A549 (cell line): ENCODE measurements at regions of chr19 and their contacts with region 1.

Region 1: GRCh38 chr19:34145741-34146202 is 26.5 kb upstream of the LSM14A start:
- DNase-seq: peak; percentile 73 to 75
- ATAC-seq: peak; percentile 66 to 81; a peak in 5 of 6 replicates
- H3K4me3 ChIP-seq: no peak overlapping the region
- H3K27ac ChIP-seq: no peak overlapping the region
- H3K4me1 ChIP-seq: no peaks in the 10 kb centered on the region
- CTCF ChIP-seq: peak; percentile 99
- EP300 ChIP-seq: no peak
- POLR2A ChIP-seq: no peak
- RAD21 ChIP-seq: peak; percentile 96 to 97

Region 2: GRCh38 chr19:33785795-33786194 is 360.0 kb before region 1 on chr19:
- CTCF ChIA-PET with region 1: interaction called, 258 read pairs
- POLR2A ChIA-PET with region 1: no interaction called
- DNase-seq: no peak
- ATAC-seq: no peak
- H3K4me3 ChIP-seq: no peak overlapping the region
- H3K27ac ChIP-seq: no peak overlapping the region
- H3K4me1 ChIP-seq: peaks cover 19% of the 10 kb centered on the region
- CTCF ChIP-seq: no peak
- EP300 ChIP-seq: no peak
- POLR2A ChIP-seq: no peak
- RAD21 ChIP-seq: no peak

Region 3: GRCh38 chr19:34075661-34076091 is 70.1 kb before region 1 on chr19:
- CTCF ChIA-PET with region 1: no interaction called
- POLR2A ChIA-PET with region 1: no interaction called
- DNase-seq: no peak
- ATAC-seq: no peak
- H3K4me3 ChIP-seq: no peak overlapping the region
- H3K27ac ChIP-seq: no peak overlapping the region
- H3K4me1 ChIP-seq: no peaks in the 10 kb centered on the region
- CTCF ChIP-seq: no peak
- EP300 ChIP-seq: no peak
- POLR2A ChIP-seq: no peak
- RAD21 ChIP-seq: no peak

Region 4: DNA sequence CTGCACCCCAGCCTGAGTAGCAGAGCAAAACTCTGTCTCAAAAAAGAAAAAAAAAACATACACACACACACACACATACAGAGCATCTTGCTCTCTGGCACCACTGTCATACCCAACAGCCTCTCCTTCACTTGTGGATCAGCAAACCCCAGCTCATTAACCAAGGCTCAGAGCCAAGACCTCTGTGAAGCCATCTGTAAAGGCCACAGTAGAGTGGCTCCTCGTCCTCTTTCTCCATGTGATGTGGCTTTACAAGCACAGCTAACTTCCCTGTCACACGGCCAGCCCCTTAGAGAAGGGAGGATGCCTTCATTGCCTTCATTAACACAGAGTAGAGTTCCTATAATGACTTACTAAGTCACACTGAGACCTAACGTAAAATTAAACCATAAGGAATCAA is 36.2 kb before region 1 on chr19:
- CTCF ChIA-PET with region 1: interaction called, 12 read pairs
- POLR2A ChIA-PET with region 1: no interaction called
- DNase-seq: no peak
- ATAC-seq: peak in 1 of 2 experiments; percentile 11; a peak in 1 of 6 replicates
- H3K4me3 ChIP-seq: no peak overlapping the region
- H3K27ac ChIP-seq: no peak overlapping the region
- H3K4me1 ChIP-seq: no peaks in the 10 kb centered on the region
- CTCF ChIP-seq: no peak
- EP300 ChIP-seq: no peak
- POLR2A ChIP-seq: no peak
- RAD21 ChIP-seq: no peak

Region 5: GRCh38 chr19:34128558-34129250 is 17.1 kb before region 1 on chr19:
- CTCF ChIA-PET with region 1: interaction called, 73 read pairs
- POLR2A ChIA-PET with region 1: interaction called, 5 read pairs
- DNase-seq: no peak
- ATAC-seq: peak in 1 of 2 experiments; percentile 38; a peak in 1 of 6 replicates
- H3K4me3 ChIP-seq: no peak overlapping the region
- H3K27ac ChIP-seq: no peak overlapping the region
- H3K4me1 ChIP-seq: peaks cover 2% of the 10 kb centered on the region; the same call in 1 of the 3 replicates
- CTCF ChIP-seq: no peak
- EP300 ChIP-seq: no peak
- POLR2A ChIP-seq: no peak
- RAD21 ChIP-seq: no peak

Region 6: GRCh38 chr19:34171877-34172660 is 26.3 kb after region 1 on chr19 and contains the start of gene LSM14A:
- CTCF ChIA-PET with region 1: interaction called, 26 read pairs
- POLR2A ChIA-PET with region 1: interaction called, 3 read pairs
- DNase-seq: peak; percentile 97 to 98
- ATAC-seq: peak; percentile 86 to 87
- H3K4me3 ChIP-seq: peak within 1 kb of the TSS; percentile 67
- H3K27ac ChIP-seq: peak within 1 kb of the TSS; percentile 94 to 95
- H3K4me1 ChIP-seq: peaks cover 38% of the 10 kb centered on the region
- CTCF ChIP-seq: no peak
- EP300 ChIP-seq: no peak
- POLR2A ChIP-seq: peak; percentile 98
- RAD21 ChIP-seq: no peak
- polyA plus RNA-seq, gene LSM14A: 264 and 278 TPM in 2 replicates

Region 7: DNA sequence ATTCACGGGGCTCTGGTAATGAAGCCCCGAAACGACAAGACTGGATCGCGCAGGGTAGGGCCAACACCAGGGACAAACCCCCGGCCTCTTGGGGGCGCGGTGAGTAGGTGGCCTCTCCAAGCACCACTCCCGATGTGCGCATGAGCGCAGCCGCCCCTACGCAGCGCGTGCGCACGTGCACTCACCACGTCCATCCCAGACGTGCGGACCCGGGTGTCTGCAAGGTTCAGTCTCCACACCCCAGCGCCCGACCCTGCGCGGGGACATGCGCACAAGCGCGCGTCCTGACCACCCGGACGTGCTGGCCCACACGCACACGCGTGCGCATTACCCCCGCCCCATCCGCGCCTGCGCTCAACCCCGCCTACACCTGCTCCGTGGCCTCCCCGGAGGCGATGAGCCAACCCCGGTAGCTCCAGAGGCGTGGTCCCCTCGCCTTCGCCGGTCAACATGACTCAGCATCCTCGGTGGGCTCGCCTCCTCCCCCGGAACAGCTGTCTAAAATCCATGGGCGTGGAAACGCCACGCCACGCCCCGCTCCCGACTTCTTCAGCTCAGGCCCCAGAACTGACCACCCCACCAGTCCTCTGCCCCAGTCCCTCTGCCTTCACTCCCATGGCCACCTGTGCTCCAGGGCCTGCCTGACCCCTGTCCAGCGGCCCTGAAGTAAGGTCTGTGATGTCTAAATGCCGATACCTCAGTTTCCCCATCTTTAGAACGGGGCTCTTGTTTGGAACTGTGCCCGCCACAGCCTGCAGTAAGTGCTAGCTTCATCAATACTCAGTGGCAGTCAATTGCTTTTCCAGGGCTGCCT is 213.6 kb after region 1 on chr19:
- CTCF ChIA-PET with region 1: no interaction called
- POLR2A ChIA-PET with region 1: no interaction called
- DNase-seq: peak; percentile 100
- ATAC-seq: peak; percentile 92 to 96
- H3K4me3 ChIP-seq: peak overlapping the region; percentile 47
- H3K27ac ChIP-seq: peak overlapping the region; percentile 90 to 92
- H3K4me1 ChIP-seq: peaks cover 20% of the 10 kb centered on the region
- CTCF ChIP-seq: peak; percentile 88
- EP300 ChIP-seq: peak in 1 of 2 experiments; percentile 52; a peak in 1 of 5 replicates
- POLR2A ChIP-seq: peak; percentile 62
- RAD21 ChIP-seq: peak in 1 of 2 experiments; percentile 29; a peak in 3 of 5 replicates